Breast epithelium (tissue), 4 donors: ENCODE measurements at regions of chr5 and their contacts with region 1.

Region 1: GRCh38 chr5:131634996-131635754 is at the start of gene RAPGEF6:
- DNase-seq: peak; percentile 95 to 99
- H3K4me3 ChIP-seq: peak within 1 kb of the TSS; percentile 84 to 93 (median 87)
- H3K27ac ChIP-seq: peak within 1 kb of the TSS; percentile 96 to 99
- H3K4me1 ChIP-seq: peaks cover 0 to 14% of the 10 kb centered on the region in 2 donors
- H3K27me3 ChIP-seq: no peaks in the 10 kb centered on the region
- CTCF ChIP-seq: peak in 1 of 3 donors; percentile 19
- POLR2A ChIP-seq: peak; percentile 60
- total RNA-seq, gene RAPGEF6: 21.8 to 56.3 (median 31.5) TPM

Region 2: GRCh38 chr5:131521252-131521651 is 113.9 kb before region 1 on chr5:
- intact Hi-C with region 1: no loop called
- DNase-seq: no peak
- H3K4me3 ChIP-seq: no peak overlapping the region
- H3K27ac ChIP-seq: no peak overlapping the region
- H3K4me1 ChIP-seq: no peaks in the 10 kb centered on the region
- H3K27me3 ChIP-seq: no peaks in the 10 kb centered on the region
- CTCF ChIP-seq: no peak
- POLR2A ChIP-seq: no peak

Region 3: DNA sequence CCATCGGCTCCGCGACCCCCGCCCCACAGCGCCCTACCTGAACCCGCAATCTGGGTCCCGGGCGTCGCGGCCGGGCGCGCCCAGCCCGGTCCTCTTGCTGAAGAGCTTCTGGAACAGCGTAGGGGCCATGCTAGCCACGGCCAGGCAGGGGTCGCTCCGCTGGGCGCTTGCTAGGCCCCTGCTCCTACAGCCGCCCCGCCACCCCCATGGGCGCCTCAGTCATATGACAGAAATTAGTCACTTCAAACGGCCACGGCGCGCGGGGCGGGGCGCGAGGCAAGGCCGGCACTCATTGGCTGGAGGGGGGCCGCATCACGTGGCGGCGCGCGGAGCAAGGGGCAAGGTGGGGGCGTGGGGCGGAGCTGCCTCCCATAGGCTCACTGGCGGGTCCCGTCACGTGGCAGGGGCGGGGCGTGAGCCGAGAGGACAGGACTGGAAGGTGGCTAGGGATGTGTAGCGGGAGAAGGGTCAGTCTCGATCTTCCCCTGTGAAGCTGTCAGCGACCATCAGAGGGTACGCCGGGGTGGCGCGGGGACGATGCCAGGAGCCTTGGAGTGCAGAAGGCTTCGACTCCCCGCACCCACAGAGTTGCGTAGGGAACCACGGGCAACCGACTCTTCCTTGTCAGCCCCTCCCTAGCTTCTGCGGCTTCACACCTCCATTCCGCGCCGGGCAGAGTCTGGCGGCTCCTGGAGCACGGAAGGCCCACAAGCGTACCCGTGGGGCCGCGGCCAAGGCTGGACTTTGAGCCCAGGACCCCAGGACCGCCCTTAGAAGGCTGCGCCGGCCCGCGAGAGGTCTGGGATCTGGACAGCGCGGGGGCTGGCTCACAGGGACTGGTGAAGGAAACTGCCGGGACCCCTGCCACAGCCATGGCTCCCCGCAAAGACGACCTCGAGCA is 161.9 kb after region 1 on chr5 and contains the start of gene FNIP1:
- intact Hi-C with region 1: loop called (anchors 10 kb)
- DNase-seq: peak; percentile 99
- H3K4me3 ChIP-seq: peak within 1 kb of the TSS; percentile 70 to 98 (median 82)
- H3K27ac ChIP-seq: peak within 1 kb of the TSS; percentile 98 to 99
- H3K4me1 ChIP-seq: no peaks in the 10 kb centered on the region
- H3K27me3 ChIP-seq: no peaks in the 10 kb centered on the region
- CTCF ChIP-seq: peak in 1 of 3 donors; percentile 37
- POLR2A ChIP-seq: peak; percentile 99
- total RNA-seq, gene FNIP1: 60.3 to 96.3 (median 70.9) TPM

Region 4: DNA sequence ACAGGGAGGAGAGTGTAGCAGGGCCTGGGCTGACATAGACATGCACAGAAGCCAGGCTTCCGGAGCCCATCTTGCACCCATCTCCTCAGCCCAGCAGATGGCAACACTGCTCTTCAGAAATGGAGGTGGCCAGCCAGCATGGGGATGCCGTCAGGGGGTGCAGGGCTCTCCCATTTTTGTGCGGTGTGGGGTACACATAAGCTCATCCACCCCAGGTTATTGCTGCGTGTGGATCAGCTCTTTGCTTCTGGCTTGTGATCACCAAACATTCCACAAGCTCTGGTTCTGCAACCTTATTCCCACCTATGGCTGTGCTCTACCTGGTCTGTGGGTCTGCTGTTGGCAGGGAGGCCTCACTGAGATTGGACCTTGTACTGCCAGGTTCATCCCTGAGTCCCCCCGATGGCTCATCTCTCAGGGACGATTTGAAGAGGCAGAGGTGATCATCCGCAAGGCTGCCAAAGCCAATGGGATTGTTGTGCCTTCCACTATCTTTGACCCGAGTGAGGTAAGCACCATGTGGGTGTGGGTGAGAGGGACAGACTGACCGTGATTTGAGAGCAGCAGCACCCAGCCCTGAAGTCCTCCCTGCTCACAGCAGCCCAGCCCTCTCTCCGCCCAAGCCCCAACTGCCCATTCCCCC is 751.6 kb after region 1 on chr5:
- intact Hi-C with region 1: no loop called
- DNase-seq: peak in 1 of 2 donors; percentile 63
- H3K4me3 ChIP-seq: peak overlapping the region in 1 of 3 donors; percentile 13
- H3K27ac ChIP-seq: peak overlapping the region; percentile 96 to 97
- H3K4me1 ChIP-seq: peaks cover 21 to 42% of the 10 kb centered on the region in 2 donors
- H3K27me3 ChIP-seq: no peaks in the 10 kb centered on the region
- CTCF ChIP-seq: peak; percentile 78 to 83 (median 82)
- POLR2A ChIP-seq: no peak